Activated CD4-positive, alpha-beta memory T cell treated with anti-CD3 and anti-CD28 coated beads, Interleukin-2, amount 10 ng/mL, durations not matched to agents 7 days and 5 days (primary cell): ENCODE measurements at regions of chr3 and their contacts with region 1.

Region 1: DNA sequence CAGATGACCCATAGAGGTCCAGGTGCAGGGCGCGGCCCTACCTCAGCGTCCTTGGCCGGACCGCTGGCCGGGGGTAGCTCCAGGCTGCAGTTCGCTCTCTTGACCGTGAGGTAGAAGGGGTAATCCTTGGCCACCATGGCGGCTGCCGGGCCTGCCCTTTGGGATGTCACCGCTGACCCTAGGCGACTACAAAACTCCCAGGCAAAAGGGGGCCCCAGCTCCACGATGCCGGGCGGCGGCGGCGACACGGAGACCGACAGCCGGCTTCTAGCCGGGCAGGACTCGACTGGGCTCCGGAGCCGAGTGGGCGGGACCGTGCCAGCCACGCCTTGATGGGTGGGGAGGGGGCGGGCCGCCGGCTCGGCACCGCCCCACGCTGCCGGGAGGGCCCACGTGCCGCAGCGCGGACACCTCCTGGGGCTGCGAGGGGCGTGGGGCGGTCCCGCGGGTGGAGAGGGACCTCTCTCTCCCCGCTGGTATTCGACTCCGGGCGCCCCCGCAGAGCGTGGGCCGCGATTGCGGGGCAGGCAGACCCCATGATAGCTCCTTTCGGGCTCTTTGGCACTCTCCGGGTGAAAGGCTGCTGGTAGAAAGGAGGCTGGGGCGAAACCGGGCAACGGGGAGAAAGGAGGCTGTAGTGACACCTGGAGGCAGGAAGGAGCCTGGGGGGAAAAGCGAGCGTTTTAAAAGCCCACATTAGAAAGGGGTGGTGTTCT is at the start of gene ARHGEF3:
- DNase-seq: peak; percentile 89
- H3K4me3 Mint-ChIP-seq: peak within 1 kb of the TSS; percentile 90
- H3K27ac Mint-ChIP-seq: peak within 1 kb of the TSS; percentile 76
- H3K4me1 Mint-ChIP-seq: peaks cover 48% of the 10 kb centered on the region
- H3K27me3 Mint-ChIP-seq: no peaks in the 10 kb centered on the region
- total RNA-seq, gene ARHGEF3: 71.3 TPM

Region 2: GRCh38 chr3:56682462-56683121 is 119.2 kb before region 1 on chr3:
- CTCF ChIA-PET with region 1: interaction called, 9 read pairs
- POLR2A ChIA-PET with region 1: interaction called, 45 read pairs
- DNase-seq: peak; percentile 80
- H3K4me3 Mint-ChIP-seq: peak overlapping the region; percentile 98
- H3K27ac Mint-ChIP-seq: peak overlapping the region; percentile 97
- H3K4me1 Mint-ChIP-seq: peaks cover 50% of the 10 kb centered on the region
- H3K27me3 Mint-ChIP-seq: no peaks in the 10 kb centered on the region

Region 3: DNA sequence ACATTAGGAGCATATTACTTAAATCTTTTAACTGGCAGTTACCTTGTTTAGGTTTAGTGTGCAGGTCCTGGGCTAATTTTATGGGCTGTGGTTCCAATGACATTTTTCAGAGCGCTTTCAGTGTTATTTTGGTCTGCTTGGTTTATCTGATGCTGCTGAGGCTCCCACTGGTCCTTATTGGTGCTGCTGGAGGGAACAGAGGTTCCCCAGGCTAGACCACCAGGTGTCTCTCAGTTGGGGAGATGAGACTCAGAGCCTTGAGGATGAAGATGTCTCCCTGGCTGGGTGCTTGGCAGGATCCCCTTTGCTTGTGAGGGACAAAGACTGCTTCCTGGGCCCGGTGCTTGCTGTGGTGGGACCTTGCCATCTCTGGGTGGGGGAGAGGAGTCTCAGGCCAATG is 90.5 kb before region 1 on chr3:
- CTCF ChIA-PET with region 1: interaction called, 247 read pairs
- POLR2A ChIA-PET with region 1: interaction called, 56 read pairs
- DNase-seq: no peak
- H3K4me3 Mint-ChIP-seq: no peak overlapping the region
- H3K27ac Mint-ChIP-seq: no peak overlapping the region
- H3K4me1 Mint-ChIP-seq: no peaks in the 10 kb centered on the region
- H3K27me3 Mint-ChIP-seq: no peaks in the 10 kb centered on the region

Region 4: GRCh38 chr3:56744016-56744415 is 57.8 kb before region 1 on chr3:
- CTCF ChIA-PET with region 1: interaction called, 12 read pairs
- POLR2A ChIA-PET with region 1: interaction called, 5 read pairs
- DNase-seq: no peak
- H3K4me3 Mint-ChIP-seq: no peak overlapping the region
- H3K27ac Mint-ChIP-seq: no peak overlapping the region
- H3K4me1 Mint-ChIP-seq: peaks cover 5% of the 10 kb centered on the region
- H3K27me3 Mint-ChIP-seq: no peaks in the 10 kb centered on the region

Region 5: GRCh38 chr3:56769116-56769707 is 32.6 kb before region 1 on chr3:
- CTCF ChIA-PET with region 1: interaction called, 13 read pairs
- POLR2A ChIA-PET with region 1: interaction called, 10 read pairs
- DNase-seq: no peak
- H3K4me3 Mint-ChIP-seq: no peak overlapping the region
- H3K27ac Mint-ChIP-seq: no peak overlapping the region
- H3K4me1 Mint-ChIP-seq: peaks cover 32% of the 10 kb centered on the region
- H3K27me3 Mint-ChIP-seq: no peaks in the 10 kb centered on the region

Region 6: GRCh38 chr3:56812754-56813650 is 11.2 kb after region 1 on chr3:
- CTCF ChIA-PET with region 1: interaction called, 11 read pairs
- POLR2A ChIA-PET with region 1: interaction called, 15 read pairs
- DNase-seq: no peak
- H3K4me3 Mint-ChIP-seq: no peak overlapping the region
- H3K27ac Mint-ChIP-seq: peak overlapping the region; percentile 17
- H3K4me1 Mint-ChIP-seq: peaks cover 35% of the 10 kb centered on the region
- H3K27me3 Mint-ChIP-seq: no peaks in the 10 kb centered on the region

Region 7: GRCh38 chr3:56862352-56863074 is 60.7 kb after region 1 on chr3:
- CTCF ChIA-PET with region 1: no interaction called
- POLR2A ChIA-PET with region 1: no interaction called
- DNase-seq: no peak
- H3K4me3 Mint-ChIP-seq: no peak overlapping the region
- H3K27ac Mint-ChIP-seq: peak overlapping the region; percentile 0
- H3K4me1 Mint-ChIP-seq: peaks cover 55% of the 10 kb centered on the region
- H3K27me3 Mint-ChIP-seq: no peaks in the 10 kb centered on the region

Region 8: GRCh38 chr3:56988458-56989168 is 186.8 kb after region 1 on chr3:
- CTCF ChIA-PET with region 1: interaction called, 84 read pairs
- POLR2A ChIA-PET with region 1: interaction called, 30 read pairs
- DNase-seq: peak; percentile 69
- H3K4me3 Mint-ChIP-seq: no peak overlapping the region
- H3K27ac Mint-ChIP-seq: no peak overlapping the region
- H3K4me1 Mint-ChIP-seq: peaks cover 14% of the 10 kb centered on the region
- H3K27me3 Mint-ChIP-seq: peaks cover 16% of the 10 kb centered on the region